ENCODE measurements at regions of chr14 and their contacts with region 1.

Region 1: GRCh38 chr14:102819176-102819628 is 42.0 kb downstream of the TRAF3 start:
- DNase-seq: peak; percentile 76
- CTCF ChIP-seq: no peak

Region 2: DNA sequence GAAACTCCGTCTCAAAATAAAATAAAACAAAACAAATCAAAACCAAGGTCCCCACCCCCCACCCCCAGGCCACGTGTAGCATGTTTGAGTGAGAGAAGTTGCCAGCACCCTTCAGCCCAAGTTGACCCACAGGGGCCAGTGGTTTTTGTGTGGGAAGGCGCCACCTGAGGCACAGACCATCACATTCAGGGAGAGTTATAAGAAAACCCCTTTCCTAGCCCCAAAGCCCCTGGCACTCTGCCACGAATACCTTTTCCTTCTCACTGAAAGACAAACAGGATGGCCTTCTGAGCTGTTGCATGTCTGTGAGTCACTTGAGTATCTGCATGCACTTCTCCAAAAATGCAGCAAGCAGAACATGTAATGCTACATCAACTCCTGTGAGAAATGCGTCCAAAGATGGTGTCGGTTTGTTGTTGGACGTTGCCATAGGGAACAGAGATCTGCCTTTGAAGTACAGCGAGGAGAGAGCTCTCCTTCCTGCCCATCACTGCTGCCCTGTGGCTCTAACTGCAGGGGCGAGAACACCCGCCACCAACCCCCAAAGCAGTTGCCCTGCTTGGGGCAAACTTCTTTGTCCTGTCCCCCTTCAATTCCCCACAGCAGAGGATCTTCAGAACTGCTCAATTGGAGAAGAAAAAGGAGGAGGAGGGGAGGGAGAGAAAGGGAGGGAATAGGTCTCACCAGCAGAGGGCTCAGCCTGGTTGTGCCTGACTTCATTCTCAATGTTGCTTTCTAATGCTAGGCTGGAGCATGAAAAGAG is 44.6 kb before region 1 on chr14:
- CTCF ChIA-PET with region 1: interaction called, 10 read pairs
- POLR2A ChIA-PET with region 1: no interaction called
- DNase-seq: peak; percentile 78
- CTCF ChIP-seq: peak; percentile 68

Region 3: GRCh38 chr14:102805371-102806246 is 13.6 kb before region 1 on chr14:
- CTCF ChIA-PET with region 1: interaction called, 14 read pairs
- POLR2A ChIA-PET with region 1: interaction called, 6 read pairs
- DNase-seq: peak; percentile 48
- CTCF ChIP-seq: no peak

Measured in GM10248 (cell line).